Spleen (tissue), 13 donors: ENCODE measurements at regions of chr20 and their contacts with region 1.

Region 1: DNA sequence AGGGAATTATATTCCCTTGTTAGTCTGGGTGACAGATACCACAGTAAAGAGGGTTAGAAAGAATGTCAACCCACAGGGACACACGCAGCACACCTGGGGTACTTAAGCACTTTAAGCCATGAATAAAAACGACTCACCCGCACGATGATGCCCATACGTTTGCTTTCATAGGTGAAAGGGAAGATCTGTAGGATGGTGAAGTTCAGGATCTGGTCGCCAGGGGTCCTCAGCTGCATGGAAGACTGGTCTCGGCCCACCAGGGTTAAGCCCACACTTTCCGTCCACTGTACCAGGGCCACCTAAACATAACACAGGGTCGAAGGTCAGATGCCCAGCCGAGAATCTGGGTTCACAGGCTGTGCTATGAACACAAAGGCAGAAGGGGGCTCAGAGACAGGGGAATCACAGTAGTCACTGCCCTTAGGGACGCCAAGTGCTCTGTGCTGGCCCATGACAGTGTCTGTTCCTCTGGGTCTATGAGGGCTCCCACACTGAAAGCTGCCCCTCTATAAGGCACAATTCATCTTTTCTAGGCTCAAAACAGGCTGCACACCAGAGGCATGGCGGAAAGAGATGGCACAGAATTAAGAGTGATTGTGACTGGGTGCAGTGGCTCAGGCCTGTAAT is 96.8 kb upstream of the NFATC2 start:
- DNase-seq: peak; percentile 83
- H3K4me3 ChIP-seq: no peak overlapping the region
- H3K27ac ChIP-seq: no peak overlapping the region
- H3K4me1 ChIP-seq: peaks cover 0 to 8% (median 0%) of the 10 kb centered on the region in 6 donors
- H3K27me3 ChIP-seq: peaks cover 0 to 2% (median 0%) of the 10 kb centered on the region in 7 donors
- CTCF ChIP-seq: peak; percentile 63 to 88 (median 82)
- POLR2A ChIP-seq: no peak

Region 2: GRCh38 chr20:51668515-51668914 is 29.2 kb after region 1 on chr20:
- intact Hi-C with region 1: no loop called
- DNase-seq: peak; percentile 37
- H3K4me3 ChIP-seq: no peak overlapping the region
- H3K27ac ChIP-seq: no peak overlapping the region
- H3K4me1 ChIP-seq: peaks cover 0 to 14% (median 0%) of the 10 kb centered on the region in 6 donors
- H3K27me3 ChIP-seq: no peaks in the 10 kb centered on the region
- CTCF ChIP-seq: no peak
- POLR2A ChIP-seq: no peak

Region 3: DNA sequence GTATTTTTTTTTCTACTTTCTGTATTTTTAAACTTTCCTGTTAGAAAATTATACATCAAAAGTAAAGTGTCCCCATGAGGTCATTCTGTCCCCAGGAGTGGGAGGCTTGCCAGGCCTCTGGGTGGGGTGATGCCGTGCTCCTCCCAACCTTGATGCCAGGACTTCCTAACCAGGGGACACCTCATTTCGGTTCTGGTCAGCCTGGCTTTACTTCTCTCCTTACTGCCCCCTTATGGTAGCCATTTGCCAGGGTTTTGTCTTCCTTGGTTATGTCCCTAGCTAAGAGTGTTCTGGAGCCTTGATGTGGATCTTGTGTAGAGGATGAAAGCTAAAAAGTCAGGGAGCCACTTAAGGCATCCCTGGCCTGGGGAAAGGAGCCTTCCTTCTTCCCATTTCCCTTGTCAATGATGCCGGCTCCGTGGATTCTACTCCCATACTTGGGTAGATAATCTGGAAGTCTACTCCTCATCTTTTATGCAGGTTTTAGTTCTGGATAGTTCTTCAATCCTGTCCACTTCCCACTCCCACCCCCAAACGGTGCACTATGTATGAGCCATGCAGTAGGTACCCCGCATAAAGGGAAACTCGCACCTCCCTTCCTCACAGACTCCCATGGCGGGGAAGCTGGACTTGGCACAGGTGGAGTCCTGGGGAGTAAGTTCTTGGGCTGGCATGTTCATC is 327.1 kb after region 1 on chr20:
- intact Hi-C with region 1: loop called (anchors 10 kb)
- DNase-seq: no peak
- H3K4me3 ChIP-seq: no peak overlapping the region
- H3K27ac ChIP-seq: no peak overlapping the region
- H3K4me1 ChIP-seq: no peaks in the 10 kb centered on the region
- H3K27me3 ChIP-seq: no peaks in the 10 kb centered on the region
- CTCF ChIP-seq: peak in 7 of 11 experiments; percentile 50 to 69 (median 54)
- POLR2A ChIP-seq: no peak

Region 4: GRCh38 chr20:52083627-52084232 is 444.4 kb after region 1 on chr20:
- intact Hi-C with region 1: loop called (anchors 10 kb)
- DNase-seq: no peak
- H3K4me3 ChIP-seq: no peak overlapping the region
- H3K27ac ChIP-seq: no peak overlapping the region
- H3K4me1 ChIP-seq: no peaks in the 10 kb centered on the region
- H3K27me3 ChIP-seq: no peaks in the 10 kb centered on the region
- CTCF ChIP-seq: peak in 7 of 11 experiments; percentile 20 to 52 (median 36)
- POLR2A ChIP-seq: no peak

Region 5: DNA sequence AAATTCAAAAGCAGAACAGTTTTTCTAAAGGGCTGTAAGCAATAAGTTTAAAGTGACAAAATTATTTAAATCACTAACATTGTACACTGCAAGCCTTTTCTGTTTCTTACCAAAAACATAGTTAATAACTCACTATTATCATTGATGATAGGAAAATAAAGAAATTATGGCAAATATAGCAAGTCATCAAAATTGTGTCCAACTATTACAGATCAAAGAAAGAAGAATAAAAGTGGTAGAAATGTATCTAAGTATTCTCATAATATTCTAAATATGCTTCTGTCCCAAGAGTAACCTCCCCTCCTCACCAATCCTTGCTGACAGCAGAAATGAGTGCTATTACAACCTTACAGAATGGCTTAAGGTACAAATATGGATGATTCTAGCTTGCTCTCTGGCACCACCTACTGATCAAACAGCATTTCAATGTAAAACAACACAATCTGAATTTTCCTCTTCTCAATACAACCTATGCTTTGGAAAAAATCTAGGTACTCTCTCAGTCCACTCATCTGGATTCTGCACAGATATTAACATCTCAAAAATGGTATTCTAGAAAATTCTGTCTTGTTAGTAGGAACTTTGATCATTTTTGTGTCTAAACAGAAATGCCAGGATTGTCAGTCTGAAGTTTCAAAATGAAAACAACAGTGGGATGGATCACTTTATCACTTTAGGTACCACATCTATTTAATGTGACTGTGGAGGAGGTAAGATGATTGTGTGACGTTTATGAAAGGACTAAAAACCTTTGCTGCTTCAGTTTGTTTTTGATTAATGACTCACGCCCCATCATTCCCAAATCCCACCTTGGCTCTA is 511.3 kb after region 1 on chr20:
- intact Hi-C with region 1: loop called (anchors 10 kb)
- DNase-seq: no peak
- H3K4me3 ChIP-seq: no peak overlapping the region
- H3K27ac ChIP-seq: no peak overlapping the region
- H3K4me1 ChIP-seq: no peaks in the 10 kb centered on the region
- H3K27me3 ChIP-seq: no peaks in the 10 kb centered on the region
- CTCF ChIP-seq: peak in 10 of 11 experiments; percentile 6 to 77 (median 58)
- POLR2A ChIP-seq: no peak